Endothelial cell of umbilical vein (primary cell): ENCODE measurements at regions of chr2 and their contacts with region 1.

Region 1: DNA sequence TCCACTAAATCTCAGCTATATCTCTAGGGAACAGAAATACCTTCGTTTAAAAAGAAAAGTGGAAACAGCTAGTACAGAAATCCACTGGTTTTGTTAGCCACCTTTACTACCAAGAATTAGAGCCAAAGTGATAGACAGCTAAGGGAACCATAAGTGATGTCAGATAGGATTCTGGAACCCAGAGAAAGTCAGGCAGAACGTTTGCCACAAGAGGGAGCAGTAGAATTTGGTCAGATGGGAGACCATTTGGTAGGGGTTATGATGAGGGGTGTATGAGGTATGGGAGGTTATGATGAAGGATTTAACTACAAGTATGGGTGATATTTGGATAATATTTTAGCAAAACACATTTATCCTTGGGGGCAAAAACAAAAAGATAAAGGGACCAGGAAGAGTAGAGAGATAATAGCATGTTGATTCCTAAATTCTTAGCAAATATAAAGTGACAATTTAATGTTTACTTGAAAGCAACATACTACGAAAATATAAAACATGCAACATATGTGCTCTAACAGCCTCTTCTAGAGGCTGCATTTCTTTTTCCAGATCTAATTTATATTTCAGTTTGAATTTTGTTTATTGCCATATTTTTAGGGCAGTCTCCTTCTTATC is 3.3 kb downstream of the SLC8A1 start:
- DNase-seq: peak; percentile 42
- H3K4me3 ChIP-seq: no peak overlapping the region
- H3K27ac ChIP-seq: no peak overlapping the region
- H3K4me1 ChIP-seq: peaks cover 10% of the 10 kb centered on the region
- H3K27me3 ChIP-seq: no peaks in the 10 kb centered on the region
- CTCF ChIP-seq: peak; percentile 47 to 59
- POLR2A ChIP-seq: no peak

Region 2: GRCh38 chr2:40244675-40245074 is 203.9 kb before region 1 on chr2:
- CTCF ChIA-PET with region 1: interaction called, 50 read pairs
- POLR2A ChIA-PET with region 1: no interaction called
- dilution Hi-C with region 1: no loop called
- intact Hi-C with region 1: loop called (anchors 1 kb)
- DNase-seq: peak; percentile 71
- H3K4me3 ChIP-seq: no peak overlapping the region
- H3K27ac ChIP-seq: no peak overlapping the region
- H3K4me1 ChIP-seq: peaks cover 5% of the 10 kb centered on the region
- H3K27me3 ChIP-seq: no peaks in the 10 kb centered on the region
- CTCF ChIP-seq: peak; percentile 47 to 64
- POLR2A ChIP-seq: no peak

Region 3: GRCh38 chr2:40363631-40364030 is 84.9 kb before region 1 on chr2:
- CTCF ChIA-PET with region 1: no interaction called
- POLR2A ChIA-PET with region 1: no interaction called
- dilution Hi-C with region 1: no loop called
- intact Hi-C with region 1: no loop called
- DNase-seq: peak; percentile 53
- H3K4me3 ChIP-seq: peak overlapping the region in 1 of 3 experiments; percentile 12
- H3K27ac ChIP-seq: no peak overlapping the region
- H3K4me1 ChIP-seq: no peaks in the 10 kb centered on the region
- H3K27me3 ChIP-seq: no peaks in the 10 kb centered on the region
- CTCF ChIP-seq: no peak
- POLR2A ChIP-seq: no peak

Region 4: DNA sequence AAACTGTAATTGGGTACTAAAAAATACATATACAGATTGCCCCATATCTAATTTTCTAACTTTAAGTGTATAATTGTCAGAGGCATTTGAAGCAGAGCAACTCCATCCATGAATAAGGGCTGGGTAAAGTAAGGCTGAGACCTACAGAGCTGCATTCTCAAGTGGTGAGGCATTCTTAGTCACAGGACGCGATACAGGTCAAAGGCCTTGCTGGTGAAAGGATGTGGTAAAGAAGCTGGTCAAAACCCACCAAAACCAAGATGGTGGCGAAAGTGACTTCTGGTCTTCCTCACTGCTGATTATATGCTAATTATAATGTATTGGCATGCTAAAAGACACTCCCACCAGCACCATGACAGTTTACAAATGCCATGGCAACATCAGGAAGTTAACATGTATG is 46.7 kb before region 1 on chr2:
- CTCF ChIA-PET with region 1: interaction called, 7 read pairs
- POLR2A ChIA-PET with region 1: no interaction called
- dilution Hi-C with region 1: no loop called
- intact Hi-C with region 1: loop called (anchors 2 kb)
- DNase-seq: peak; percentile 67
- H3K4me3 ChIP-seq: no peak overlapping the region
- H3K27ac ChIP-seq: peak overlapping the region; percentile 59
- H3K4me1 ChIP-seq: peaks cover 26% of the 10 kb centered on the region
- H3K27me3 ChIP-seq: no peaks in the 10 kb centered on the region
- CTCF ChIP-seq: no peak
- POLR2A ChIP-seq: peak; percentile 18

Region 5: DNA sequence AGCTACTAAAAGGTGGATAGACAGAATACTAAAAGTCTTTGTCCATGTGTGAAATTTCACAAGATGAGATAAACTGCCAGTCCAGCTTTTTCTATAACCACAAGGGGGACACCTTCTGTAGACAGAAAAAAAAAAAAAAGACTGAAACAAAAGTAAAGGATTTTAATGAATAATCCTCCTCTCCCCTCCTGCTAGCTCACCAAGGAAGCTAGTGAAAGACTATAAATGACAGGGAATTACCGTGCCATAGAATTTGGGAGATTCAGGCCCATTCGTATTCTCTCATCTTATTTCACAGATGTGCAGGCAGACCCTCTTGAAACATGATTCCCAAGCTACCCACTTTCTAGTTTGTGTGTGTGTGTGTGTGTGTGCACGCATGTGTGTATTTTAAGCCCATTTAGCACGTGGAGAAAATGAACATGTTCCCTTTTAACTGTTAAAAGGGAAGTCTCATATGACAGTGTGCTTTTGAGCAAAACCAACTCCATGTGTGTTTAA is 39.6 kb after region 1 on chr2:
- CTCF ChIA-PET with region 1: interaction called, 8 read pairs
- POLR2A ChIA-PET with region 1: no interaction called
- dilution Hi-C with region 1: no loop called
- intact Hi-C with region 1: loop called (anchors 1 kb)
- DNase-seq: peak; percentile 39
- H3K4me3 ChIP-seq: no peak overlapping the region
- H3K27ac ChIP-seq: no peak overlapping the region
- H3K4me1 ChIP-seq: no peaks in the 10 kb centered on the region
- H3K27me3 ChIP-seq: no peaks in the 10 kb centered on the region
- CTCF ChIP-seq: peak; percentile 15 to 45
- POLR2A ChIP-seq: no peak

Region 6: GRCh38 chr2:40760071-40760666 is 311.6 kb after region 1 on chr2:
- CTCF ChIA-PET with region 1: interaction called, 6 read pairs
- POLR2A ChIA-PET with region 1: no interaction called
- dilution Hi-C with region 1: no loop called
- intact Hi-C with region 1: loop called (anchors 1 kb)
- DNase-seq: peak; percentile 45
- H3K4me3 ChIP-seq: no peak overlapping the region
- H3K27ac ChIP-seq: no peak overlapping the region
- H3K4me1 ChIP-seq: no peaks in the 10 kb centered on the region
- H3K27me3 ChIP-seq: no peaks in the 10 kb centered on the region
- CTCF ChIP-seq: peak; percentile 48 to 49
- POLR2A ChIP-seq: no peak

Region 7: DNA sequence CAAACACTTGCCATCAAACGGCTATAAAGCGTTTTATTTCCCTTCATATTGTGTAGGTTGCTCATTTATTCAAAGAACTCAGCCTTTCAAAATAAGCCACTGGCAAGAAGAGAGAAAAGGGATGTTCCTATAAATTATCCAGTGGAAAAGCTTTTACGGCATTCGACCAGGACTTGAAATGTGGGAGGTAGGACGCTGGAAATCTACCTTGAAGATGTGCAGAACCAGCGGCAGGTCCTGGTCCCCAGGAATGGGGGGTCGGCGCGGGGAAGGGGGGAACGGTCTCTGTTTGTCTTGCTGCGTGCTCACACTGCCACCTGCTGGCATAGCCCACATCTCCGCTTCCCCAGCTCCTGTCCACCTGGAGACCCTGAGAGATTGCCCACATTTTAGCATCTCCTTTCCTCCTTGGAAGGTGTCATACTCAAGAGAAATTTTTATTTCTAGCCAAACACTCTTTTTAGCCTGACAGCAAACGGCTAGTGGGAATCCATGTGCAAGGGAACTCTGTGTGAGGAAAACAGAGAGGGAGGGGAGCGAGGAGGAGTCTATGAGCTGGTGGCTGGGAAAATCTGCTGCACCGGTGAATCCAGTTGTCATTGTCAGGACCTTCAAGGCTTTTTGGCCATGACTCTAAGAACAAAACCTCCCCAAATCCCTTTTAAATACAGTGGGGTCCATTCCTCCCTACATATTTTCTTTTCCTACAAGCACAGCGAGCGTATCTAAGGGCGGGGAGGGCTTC is 1250.3 kb after region 1 on chr2:
- CTCF ChIA-PET with region 1: interaction called, 10 read pairs
- POLR2A ChIA-PET with region 1: no interaction called
- dilution Hi-C with region 1: no loop called
- intact Hi-C with region 1: no loop called
- DNase-seq: peak; percentile 21
- H3K4me3 ChIP-seq: no peak overlapping the region
- H3K27ac ChIP-seq: no peak overlapping the region
- H3K4me1 ChIP-seq: no peaks in the 10 kb centered on the region
- H3K27me3 ChIP-seq: no peaks in the 10 kb centered on the region
- CTCF ChIP-seq: peak; percentile 55 to 84
- POLR2A ChIP-seq: no peak